ENCODE measurements at regions of chr1 and their contacts with region 1.

Region 1: GRCh38 chr1:107529502-107530149 is 388.8 kb downstream of the NTNG1 start:
- DNase-seq: peak; percentile 70
- H3K4me3 ChIP-seq: no peak overlapping the region
- H3K27ac ChIP-seq: peak overlapping the region; percentile 99
- H3K4me1 ChIP-seq: peaks cover 50% of the 10 kb centered on the region
- H3K27me3 ChIP-seq: no peaks in the 10 kb centered on the region
- CTCF ChIP-seq: peak; percentile 89 to 94

Region 2: GRCh38 chr1:106022312-106022902 is 1507.2 kb before region 1 on chr1:
- CTCF ChIA-PET with region 1: no interaction called
- dilution Hi-C with region 1: no loop called
- in situ Hi-C with region 1: no loop called
- intact Hi-C with region 1: loop called (anchors 5 kb)
- DNase-seq: no peak
- H3K4me3 ChIP-seq: no peak overlapping the region
- H3K27ac ChIP-seq: no peak overlapping the region
- H3K4me1 ChIP-seq: no peaks in the 10 kb centered on the region
- H3K27me3 ChIP-seq: no peaks in the 10 kb centered on the region
- CTCF ChIP-seq: peak; percentile 28 to 38

Region 3: GRCh38 chr1:107142140-107142542 is 387.5 kb before region 1 on chr1:
- CTCF ChIA-PET with region 1: no interaction called
- dilution Hi-C with region 1: no loop called
- in situ Hi-C with region 1: no loop called
- intact Hi-C with region 1: loop called (anchors 5 kb)
- DNase-seq: peak; percentile 49
- H3K4me3 ChIP-seq: peak overlapping the region; percentile 63 to 68 (median 64)
- H3K27ac ChIP-seq: no peak overlapping the region
- H3K4me1 ChIP-seq: peaks cover 34% of the 10 kb centered on the region
- H3K27me3 ChIP-seq: no peaks in the 10 kb centered on the region
- CTCF ChIP-seq: peak; percentile 51 to 56

Region 4: DNA sequence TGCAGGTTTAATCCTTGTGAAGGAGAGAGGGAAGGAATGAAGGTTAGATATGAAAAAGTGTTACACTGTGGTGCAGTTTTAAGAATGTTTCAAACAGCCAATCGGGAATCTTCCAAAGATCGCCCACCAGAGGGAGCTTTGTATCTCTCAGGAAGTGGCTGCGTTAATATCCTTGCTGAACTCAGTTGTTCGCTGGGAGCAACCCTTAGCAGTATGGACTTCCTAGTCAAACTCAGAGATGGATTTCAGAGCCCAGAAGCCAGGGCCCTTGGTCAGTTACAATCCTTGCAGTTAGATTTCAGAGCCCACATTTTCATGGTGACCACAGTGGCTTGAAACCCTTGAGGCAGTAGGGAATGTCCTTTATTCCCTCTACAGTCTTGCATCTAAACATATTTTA is 252.6 kb before region 1 on chr1:
- CTCF ChIA-PET with region 1: interaction called, 5 read pairs
- dilution Hi-C with region 1: no loop called
- in situ Hi-C with region 1: no loop called
- intact Hi-C with region 1: loop called (anchors 1 kb)
- DNase-seq: peak; percentile 43
- H3K4me3 ChIP-seq: no peak overlapping the region
- H3K27ac ChIP-seq: no peak overlapping the region
- H3K4me1 ChIP-seq: peaks cover 4% of the 10 kb centered on the region
- H3K27me3 ChIP-seq: no peaks in the 10 kb centered on the region
- CTCF ChIP-seq: peak; percentile 36 to 58

Region 5: DNA sequence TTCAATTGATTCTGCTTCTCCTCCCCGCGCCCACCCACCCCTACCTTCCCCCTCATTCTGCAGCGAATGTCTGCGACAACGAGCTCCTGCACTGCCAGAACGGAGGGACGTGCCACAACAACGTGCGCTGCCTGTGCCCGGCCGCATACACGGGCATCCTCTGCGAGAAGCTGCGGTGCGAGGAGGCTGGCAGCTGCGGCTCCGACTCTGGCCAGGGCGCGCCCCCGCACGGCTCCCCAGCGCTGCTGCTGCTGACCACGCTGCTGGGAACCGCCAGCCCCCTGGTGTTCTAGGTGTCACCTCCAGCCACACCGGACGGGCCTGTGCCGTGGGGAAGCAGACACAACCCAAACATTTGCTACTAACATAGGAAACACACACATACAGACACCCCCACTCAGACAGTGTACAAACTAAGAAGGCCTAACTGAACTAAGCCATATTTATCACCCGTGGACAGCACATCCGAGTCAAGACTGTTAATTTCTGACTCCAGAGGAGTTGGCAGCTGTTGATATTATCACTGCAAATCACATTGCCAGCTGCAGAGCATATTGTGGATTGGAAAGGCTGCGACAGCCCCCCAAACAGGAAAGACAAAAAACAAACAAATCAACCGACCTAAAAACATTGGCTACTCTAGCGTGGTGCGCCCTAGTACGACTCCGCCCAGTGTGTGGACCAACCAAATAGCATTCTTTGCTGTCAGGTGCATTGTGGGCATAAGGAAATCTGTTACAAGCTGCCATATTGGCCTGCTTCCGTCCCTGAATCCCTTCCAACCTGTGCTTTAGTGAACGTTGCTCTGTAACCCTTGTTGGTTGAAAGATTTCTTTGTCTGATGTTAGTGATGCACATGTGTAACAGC is 48.8 kb before region 1 on chr1:
- CTCF ChIA-PET with region 1: no interaction called
- dilution Hi-C with region 1: no loop called
- in situ Hi-C with region 1: no loop called
- intact Hi-C with region 1: no loop called
- DNase-seq: no peak
- H3K4me3 ChIP-seq: peak overlapping the region in 1 of 3 experiments; percentile 2
- H3K27ac ChIP-seq: no peak overlapping the region
- H3K4me1 ChIP-seq: no peaks in the 10 kb centered on the region
- H3K27me3 ChIP-seq: no peaks in the 10 kb centered on the region
- CTCF ChIP-seq: peak in 1 of 2 donors; percentile 2

Region 6: DNA sequence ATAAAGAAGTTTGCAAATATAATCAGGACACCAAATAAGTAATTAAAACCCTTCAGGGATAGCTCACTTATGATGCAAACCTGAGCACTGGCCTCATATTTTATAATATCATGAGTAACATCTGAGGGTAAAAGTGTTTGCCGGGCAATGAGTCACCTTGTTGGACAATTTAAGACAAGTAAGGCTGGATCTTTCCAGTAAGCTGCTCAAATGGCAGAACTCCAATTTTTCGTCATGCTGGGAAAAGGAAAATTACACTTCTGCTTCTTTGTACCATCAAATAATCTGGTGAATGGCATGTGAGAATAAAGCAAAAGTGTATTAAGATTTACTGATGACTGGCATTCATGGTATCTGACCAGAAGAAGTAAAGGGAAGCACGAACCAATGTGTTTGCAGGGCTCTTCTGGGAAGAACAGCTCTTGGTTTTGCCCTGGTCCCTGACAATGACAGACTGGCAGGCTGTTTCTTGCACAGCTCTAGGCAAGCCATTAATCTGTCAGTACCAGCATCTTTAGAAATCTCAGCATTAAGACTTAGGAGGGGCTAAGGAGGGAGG is 43.1 kb after region 1 on chr1:
- CTCF ChIA-PET with region 1: interaction called, 5 read pairs
- dilution Hi-C with region 1: no loop called
- in situ Hi-C with region 1: no loop called
- intact Hi-C with region 1: loop called (anchors 2 kb)
- DNase-seq: peak; percentile 93
- H3K4me3 ChIP-seq: peak overlapping the region in 2 of 3 experiments; percentile 1 to 4
- H3K27ac ChIP-seq: no peak overlapping the region
- H3K4me1 ChIP-seq: peaks cover 20% of the 10 kb centered on the region
- H3K27me3 ChIP-seq: no peaks in the 10 kb centered on the region
- CTCF ChIP-seq: no peak

Region 7: DNA sequence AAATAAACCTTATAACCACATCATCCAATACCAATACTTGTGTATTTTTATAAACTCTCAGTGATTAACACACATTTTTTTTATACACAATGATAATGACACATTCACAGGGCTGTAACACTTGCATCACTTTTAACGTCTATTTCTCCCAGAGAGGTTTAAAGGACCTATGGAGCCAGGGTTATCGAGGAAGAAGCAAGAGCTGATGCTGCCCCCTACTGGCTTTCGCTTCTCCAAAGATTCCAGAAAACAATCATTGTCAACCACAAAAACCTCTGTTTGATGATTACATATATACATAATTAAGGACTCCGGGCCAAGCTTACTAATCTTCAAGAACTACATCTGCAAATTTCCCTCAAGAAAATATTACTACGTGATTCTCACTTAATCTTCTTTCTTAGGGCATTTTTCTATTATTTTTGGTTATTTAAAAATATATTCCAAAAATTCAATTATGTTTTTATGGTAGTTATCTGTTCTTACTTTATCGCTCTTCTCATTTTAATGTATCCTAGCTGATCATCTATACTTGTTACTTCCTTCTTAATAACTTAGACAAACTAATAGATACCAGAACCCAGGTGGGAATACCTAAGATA is 220.8 kb after region 1 on chr1:
- CTCF ChIA-PET with region 1: interaction called, 5 read pairs
- dilution Hi-C with region 1: no loop called
- in situ Hi-C with region 1: loop called in 1 of 2 experiments (anchors 25 kb)
- intact Hi-C with region 1: loop called (anchors 1 kb)
- DNase-seq: peak; percentile 73
- H3K4me3 ChIP-seq: no peak overlapping the region
- H3K27ac ChIP-seq: no peak overlapping the region
- H3K4me1 ChIP-seq: no peaks in the 10 kb centered on the region
- H3K27me3 ChIP-seq: no peaks in the 10 kb centered on the region
- CTCF ChIP-seq: peak; percentile 59 to 86

Measured in mammary epithelial cell (primary cell).